Activated naive CD4-positive, alpha-beta T cell treated with anti-CD3 and anti-CD28 coated beads for 36 hours (primary cell): ENCODE measurements at regions of chr2 and their contacts with region 1.

Region 1: DNA sequence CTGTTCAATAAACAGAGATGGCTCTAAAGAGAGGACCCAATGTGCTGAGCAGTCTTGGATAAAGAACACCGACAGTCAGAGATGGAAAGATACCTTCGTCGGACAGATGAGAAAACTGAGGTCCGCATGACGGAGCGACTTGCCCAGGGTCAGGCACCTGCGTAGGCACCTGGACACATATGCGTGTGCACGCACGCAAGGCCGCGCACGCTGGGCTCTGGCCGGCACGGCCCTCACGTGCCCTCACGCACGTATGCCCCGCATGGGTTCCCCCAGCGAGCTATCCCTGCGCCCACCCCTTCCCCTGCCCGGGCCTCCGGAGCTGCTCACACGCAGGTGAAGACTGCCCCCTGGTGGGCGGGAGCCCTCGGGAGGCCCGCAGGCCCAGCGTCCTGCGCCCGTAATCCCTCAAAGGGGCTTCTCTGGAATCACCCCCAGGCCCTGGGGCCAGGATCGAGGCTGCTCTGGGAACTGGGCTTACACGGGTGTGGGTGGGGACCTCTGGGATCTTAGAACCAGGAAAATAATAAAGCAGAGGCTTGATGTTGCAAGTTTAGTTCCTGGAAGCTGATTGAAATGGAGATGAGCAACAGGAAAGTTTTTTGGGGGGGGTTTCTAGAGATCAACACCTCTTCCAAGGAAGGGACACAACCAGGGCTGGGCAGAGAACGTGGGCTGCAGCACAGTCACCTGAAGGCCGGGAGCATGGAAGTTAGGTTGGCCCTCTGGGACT is 246.3 kb downstream of the TNS1 start:
- DNase-seq: peak; percentile 79
- H3K4me3 Mint-ChIP-seq: peak overlapping the region; percentile 54
- H3K27ac Mint-ChIP-seq: peak overlapping the region; percentile 19
- H3K4me1 Mint-ChIP-seq: peaks cover 23% of the 10 kb centered on the region
- H3K27me3 Mint-ChIP-seq: peaks cover 2% of the 10 kb centered on the region

Region 2: DNA sequence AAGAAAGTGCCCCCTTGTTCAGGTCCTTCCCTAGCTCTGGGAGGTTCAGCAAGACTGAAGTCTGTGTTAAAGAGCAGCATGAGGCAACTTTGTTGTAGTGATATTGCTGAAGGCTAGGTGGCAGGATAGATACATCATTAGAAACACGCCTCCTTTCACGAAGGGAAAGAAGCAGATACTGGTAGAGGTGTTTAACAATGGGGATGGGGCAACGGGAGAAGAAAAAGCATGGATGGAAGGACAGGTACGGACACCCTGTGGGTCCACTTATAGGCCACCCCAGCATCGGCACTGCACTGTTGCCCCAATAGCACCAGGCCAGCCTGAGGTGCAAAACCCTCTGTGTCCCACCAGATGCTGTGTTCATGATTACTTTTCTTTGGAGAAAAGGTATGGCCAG is 1057.6 kb before region 1 on chr2:
- CTCF ChIA-PET with region 1: interaction called, 4 read pairs
- intact Hi-C with region 1: loop called (anchors 5 kb)
- DNase-seq: peak; percentile 27
- H3K4me3 Mint-ChIP-seq: no peak overlapping the region
- H3K27ac Mint-ChIP-seq: no peak overlapping the region
- H3K4me1 Mint-ChIP-seq: peaks cover 8% of the 10 kb centered on the region
- H3K27me3 Mint-ChIP-seq: peaks cover 40% of the 10 kb centered on the region

Region 3: DNA sequence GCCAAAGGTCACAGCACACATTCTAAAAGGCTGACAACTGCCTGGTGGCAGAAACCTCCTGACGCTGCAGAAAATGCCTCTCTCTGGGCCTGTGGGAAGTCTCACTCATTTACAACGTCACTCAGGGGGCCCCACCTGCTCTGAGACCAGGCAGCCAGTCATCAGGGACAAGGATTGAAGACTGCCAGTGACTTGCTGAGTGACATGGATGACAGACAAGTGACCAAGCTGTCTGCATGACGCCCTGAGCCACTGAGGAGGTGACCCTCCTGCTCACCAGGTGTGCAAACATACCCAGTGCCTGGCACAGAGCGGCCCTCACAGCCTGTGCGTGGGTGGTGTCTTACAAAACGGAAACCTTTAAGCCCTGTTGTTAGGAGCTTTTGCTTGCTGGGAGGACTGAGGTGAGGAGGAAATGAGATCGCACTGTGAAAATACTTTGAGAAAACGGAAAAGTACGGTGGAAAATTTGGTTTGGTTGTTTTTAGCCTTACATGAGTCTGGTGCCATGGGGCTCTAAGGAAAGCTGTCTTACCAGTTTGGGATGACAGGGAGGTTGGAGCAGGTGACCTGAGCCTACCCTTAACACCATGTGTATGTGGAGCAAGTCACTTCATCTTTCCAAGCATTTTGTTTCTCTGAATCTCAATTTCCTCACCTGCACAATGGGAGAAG is 146.0 kb before region 1 on chr2:
- CTCF ChIA-PET with region 1: no interaction called
- intact Hi-C with region 1: no loop called
- DNase-seq: peak; percentile 89
- H3K4me3 Mint-ChIP-seq: peak overlapping the region; percentile 25
- H3K27ac Mint-ChIP-seq: peak overlapping the region; percentile 84
- H3K4me1 Mint-ChIP-seq: peaks cover 54% of the 10 kb centered on the region
- H3K27me3 Mint-ChIP-seq: no peaks in the 10 kb centered on the region

Region 4: DNA sequence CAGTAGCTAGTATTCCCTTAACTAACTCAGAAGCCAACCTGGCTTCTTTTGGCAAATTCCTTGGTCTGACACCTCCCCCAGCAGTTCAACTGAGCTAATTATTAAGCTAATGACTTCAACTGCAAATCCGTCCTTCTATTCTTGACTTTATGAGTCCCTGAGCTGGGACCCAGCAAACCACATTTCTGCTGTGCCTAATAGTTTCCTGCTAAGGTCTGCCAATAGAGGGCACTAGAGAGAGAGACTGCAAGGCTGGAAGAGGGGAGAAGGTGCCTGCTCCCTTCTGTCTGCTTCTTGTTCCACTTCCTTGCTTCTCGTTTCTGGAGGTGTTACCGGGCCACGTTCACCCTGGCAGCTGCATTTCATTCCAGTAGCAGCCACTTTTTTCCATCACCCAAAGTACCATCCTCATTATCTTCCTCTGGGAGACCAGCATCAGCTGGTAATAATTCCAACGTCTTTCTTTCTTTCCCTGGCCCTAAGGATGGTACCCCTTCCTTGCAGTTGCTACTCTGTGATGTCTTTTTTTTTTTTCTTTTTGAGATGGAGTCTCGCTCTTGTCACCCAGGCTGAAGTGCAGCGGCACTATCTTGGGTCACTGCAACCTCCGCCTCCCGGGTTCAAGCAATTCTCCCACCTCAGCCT is 105.7 kb before region 1 on chr2:
- CTCF ChIA-PET with region 1: interaction called, 4 read pairs
- intact Hi-C with region 1: loop called (anchors 1 kb)
- DNase-seq: peak; percentile 42
- H3K4me3 Mint-ChIP-seq: no peak overlapping the region
- H3K27ac Mint-ChIP-seq: no peak overlapping the region
- H3K4me1 Mint-ChIP-seq: no peaks in the 10 kb centered on the region
- H3K27me3 Mint-ChIP-seq: no peaks in the 10 kb centered on the region

Region 5: DNA sequence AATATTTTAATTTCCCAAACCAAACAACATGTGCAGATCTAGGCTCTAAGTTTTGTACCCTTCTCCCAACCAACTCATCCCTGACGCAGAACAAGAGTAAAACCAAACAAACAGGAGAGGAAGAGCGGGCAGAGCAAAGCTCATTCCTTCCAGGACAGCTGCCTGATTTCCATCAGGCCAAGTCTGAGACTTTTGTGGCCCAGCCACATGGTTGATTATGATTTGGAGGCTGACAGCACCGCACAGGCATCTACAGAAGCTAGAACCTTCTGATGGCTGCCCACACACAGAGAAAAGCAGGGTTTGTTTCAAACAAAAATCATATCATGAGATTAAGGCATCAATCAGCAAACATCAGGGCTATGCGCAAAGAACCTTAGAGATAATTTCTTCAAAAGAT is 16.4 kb before region 1 on chr2:
- CTCF ChIA-PET with region 1: no interaction called
- intact Hi-C with region 1: no loop called
- DNase-seq: no peak
- H3K4me3 Mint-ChIP-seq: no peak overlapping the region
- H3K27ac Mint-ChIP-seq: no peak overlapping the region
- H3K4me1 Mint-ChIP-seq: peaks cover 4% of the 10 kb centered on the region
- H3K27me3 Mint-ChIP-seq: no peaks in the 10 kb centered on the region

Region 6: DNA sequence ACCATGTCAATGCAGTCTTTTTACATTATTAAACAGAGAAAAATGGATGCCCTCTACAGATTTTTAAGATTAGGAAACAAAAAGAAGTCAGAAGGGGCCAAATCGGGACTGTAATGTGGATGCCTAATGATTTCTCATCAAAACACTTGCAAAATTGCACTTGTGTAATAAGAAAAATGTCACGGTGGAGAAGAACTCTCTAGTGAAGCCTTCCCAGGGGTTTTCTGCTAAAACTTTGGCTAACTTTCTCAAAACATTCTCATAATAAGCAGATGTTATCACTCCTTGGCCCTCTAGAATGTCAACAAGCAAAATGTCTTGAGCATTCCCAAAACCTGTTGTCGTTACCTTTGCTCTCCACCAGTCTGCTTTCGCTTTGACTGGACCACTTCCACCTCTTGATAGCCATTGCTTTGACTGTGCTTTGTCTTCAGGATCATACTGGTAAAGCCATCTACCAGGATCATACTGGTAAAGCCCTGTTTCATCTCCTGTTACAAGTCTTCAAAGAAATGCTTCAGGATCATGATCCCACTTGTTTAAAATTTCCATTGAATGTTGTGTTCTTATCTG is 19.5 kb after region 1 on chr2:
- CTCF ChIA-PET with region 1: interaction called, 5 read pairs
- intact Hi-C with region 1: loop called (anchors 2 kb)
- DNase-seq: no peak
- H3K4me3 Mint-ChIP-seq: no peak overlapping the region
- H3K27ac Mint-ChIP-seq: no peak overlapping the region
- H3K4me1 Mint-ChIP-seq: peaks cover 1% of the 10 kb centered on the region
- H3K27me3 Mint-ChIP-seq: no peaks in the 10 kb centered on the region